Right cardiac atrium (tissue), 5 donors: ENCODE measurements at regions of chr13 and their contacts with region 1.

Region 1: DNA sequence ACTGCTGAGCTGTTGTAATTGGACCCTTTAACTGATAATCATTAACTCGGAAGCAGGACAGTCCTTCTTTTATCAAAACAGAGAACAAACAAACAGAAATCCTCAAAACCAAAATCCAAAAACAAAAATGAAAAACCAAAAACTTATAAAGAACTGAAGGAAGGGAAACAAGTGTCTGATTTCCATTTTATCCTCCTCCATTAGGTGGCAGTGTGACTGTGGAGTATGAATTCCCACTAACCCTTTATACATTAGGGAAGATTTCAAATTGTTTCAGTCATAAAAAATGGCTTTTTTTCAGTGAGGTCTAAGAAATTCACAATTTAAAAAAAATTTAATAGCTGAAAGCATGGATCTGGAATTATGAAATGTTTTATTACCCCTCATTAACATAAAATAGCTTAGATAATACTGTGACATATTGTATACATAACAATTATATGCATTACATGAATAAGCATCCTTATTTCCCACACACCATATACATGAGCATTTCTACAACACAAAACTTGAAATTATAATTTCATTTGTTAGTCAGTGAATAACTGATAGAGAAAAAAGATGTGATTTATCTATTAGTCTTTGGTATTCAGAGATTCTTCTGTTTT is 1074.3 kb upstream of the PCDH9 start:
- DNase-seq: no peak
- ATAC-seq: no peak
- H3K4me3 ChIP-seq: no peak overlapping the region
- H3K27ac ChIP-seq: no peak overlapping the region
- H3K4me1 ChIP-seq: no peaks in the 10 kb centered on the region
- H3K27me3 ChIP-seq: no peaks in the 10 kb centered on the region

Region 2: GRCh38 chr13:68927387-68928026 is 623.1 kb after region 1 on chr13:
- intact Hi-C with region 1: loop called in 1 of 4 experiments (anchors 10 kb)
- DNase-seq: no peak
- ATAC-seq: no peak
- H3K4me3 ChIP-seq: no peak overlapping the region
- H3K27ac ChIP-seq: no peak overlapping the region
- H3K4me1 ChIP-seq: no peaks in the 10 kb centered on the region
- H3K27me3 ChIP-seq: no peaks in the 10 kb centered on the region